Panc1 (cell line): ENCODE measurements at regions of chr15 and their contacts with region 1.

Region 1: DNA sequence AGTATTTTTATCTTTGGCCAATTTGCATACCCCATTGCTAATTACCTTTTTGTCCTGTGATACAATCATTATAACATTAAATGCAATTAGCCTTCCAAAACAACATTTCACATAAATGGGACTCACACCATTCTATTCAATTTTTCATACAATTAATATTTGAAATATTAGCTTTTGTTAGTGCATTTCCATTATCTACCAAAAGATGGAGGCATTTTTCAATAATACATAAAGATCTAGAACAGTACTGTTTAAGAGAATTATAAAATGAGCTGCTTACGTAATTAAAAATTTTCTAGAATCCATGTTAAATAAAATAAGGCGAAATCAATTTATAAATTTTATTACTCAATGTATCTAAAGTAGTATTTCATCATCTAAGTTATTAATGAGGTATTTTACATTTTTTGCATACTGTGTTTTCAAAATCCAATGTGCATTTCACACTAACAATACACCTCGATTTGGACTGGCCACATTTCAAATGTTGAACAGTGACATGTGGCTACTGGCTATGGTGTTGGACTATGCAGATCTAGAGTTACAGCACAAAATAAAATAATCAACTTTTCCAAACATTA is 74.3 kb downstream of the TJP1 start:
- DNase-seq: no peak
- ATAC-seq: no peak
- H3K4me3 ChIP-seq: no peak overlapping the region
- H3K27ac ChIP-seq: no peak overlapping the region
- H3K4me1 ChIP-seq: no peaks in the 10 kb centered on the region
- H3K27me3 ChIP-seq: no peaks in the 10 kb centered on the region
- CTCF ChIP-seq: peak; percentile 28; the same call in 1 of the 2 replicates

Region 2: GRCh38 chr15:29432191-29433049 is 315.5 kb before region 1 on chr15:
- CTCF ChIA-PET with region 1: no interaction called
- POLR2A ChIA-PET with region 1: no interaction called
- in situ Hi-C with region 1: no loop called
- intact Hi-C with region 1: no loop called
- DNase-seq: no peak
- ATAC-seq: no peak
- H3K4me3 ChIP-seq: no peak overlapping the region
- H3K27ac ChIP-seq: no peak overlapping the region
- H3K4me1 ChIP-seq: no peaks in the 10 kb centered on the region
- H3K27me3 ChIP-seq: peaks cover 8% of the 10 kb centered on the region; the same call in 1 of the 2 replicates
- CTCF ChIP-seq: no peak

Region 3: GRCh38 chr15:29925227-29926082 is 177.5 kb after region 1 on chr15:
- CTCF ChIA-PET with region 1: interaction called, 6 read pairs
- POLR2A ChIA-PET with region 1: no interaction called
- in situ Hi-C with region 1: no loop called
- intact Hi-C with region 1: loop called (anchors 5 kb)
- DNase-seq: no peak
- ATAC-seq: peak; percentile 92
- H3K4me3 ChIP-seq: no peak overlapping the region
- H3K27ac ChIP-seq: no peak overlapping the region
- H3K4me1 ChIP-seq: peaks cover 8% of the 10 kb centered on the region; the same call in 1 of the 2 replicates
- H3K27me3 ChIP-seq: no peaks in the 10 kb centered on the region
- CTCF ChIP-seq: peak; percentile 92